B cell (primary cell): ENCODE measurements at regions of chr6 and their contacts with region 1.

Region 1: DNA sequence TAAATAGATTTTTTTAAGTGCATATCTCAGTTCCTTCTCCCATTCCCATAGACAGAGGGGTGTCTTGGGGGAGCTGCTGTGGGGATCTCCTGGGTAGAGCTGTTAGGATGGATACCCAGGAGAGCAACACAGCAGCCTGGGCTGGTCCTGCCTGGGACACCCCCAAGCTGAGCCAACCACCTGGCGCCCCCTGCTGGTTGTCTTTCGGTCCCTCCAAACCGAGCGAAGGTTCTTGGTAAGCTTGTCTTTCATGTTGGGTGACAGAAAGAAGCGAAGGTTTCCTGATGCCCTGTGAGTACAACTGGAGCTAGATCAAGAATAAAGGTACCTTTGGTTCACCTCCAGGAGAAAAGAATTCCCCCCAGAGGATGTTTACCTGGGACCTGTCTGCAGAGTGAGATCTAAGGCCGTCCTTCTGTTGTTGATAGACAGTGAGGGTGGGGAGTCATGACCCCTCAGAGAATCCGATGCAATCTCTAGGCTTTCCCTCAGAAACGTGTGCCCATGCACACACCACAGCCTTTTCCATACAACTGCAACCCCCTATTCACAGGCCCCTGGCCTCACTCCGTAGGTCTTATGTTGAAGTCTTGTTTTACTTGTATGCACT is 50.8 kb downstream of the SNX9 start:
- DNase-seq: peak; percentile 85
- ATAC-seq: peak; percentile 86
- H3K4me3 ChIP-seq: no peak overlapping the region
- H3K4me3 Mint-ChIP-seq: no peak overlapping the region
- H3K27ac ChIP-seq: no peak overlapping the region
- H3K27ac Mint-ChIP-seq: no peak overlapping the region
- H3K4me1 ChIP-seq: peaks cover 12 to 16% of the 10 kb centered on the region in 2 donors
- H3K4me1 Mint-ChIP-seq: peaks cover 26% of the 10 kb centered on the region
- H3K27me3 ChIP-seq: no peaks in the 10 kb centered on the region
- H3K27me3 Mint-ChIP-seq: no peaks in the 10 kb centered on the region
- CTCF ChIP-seq: peak; percentile 96

Region 2: DNA sequence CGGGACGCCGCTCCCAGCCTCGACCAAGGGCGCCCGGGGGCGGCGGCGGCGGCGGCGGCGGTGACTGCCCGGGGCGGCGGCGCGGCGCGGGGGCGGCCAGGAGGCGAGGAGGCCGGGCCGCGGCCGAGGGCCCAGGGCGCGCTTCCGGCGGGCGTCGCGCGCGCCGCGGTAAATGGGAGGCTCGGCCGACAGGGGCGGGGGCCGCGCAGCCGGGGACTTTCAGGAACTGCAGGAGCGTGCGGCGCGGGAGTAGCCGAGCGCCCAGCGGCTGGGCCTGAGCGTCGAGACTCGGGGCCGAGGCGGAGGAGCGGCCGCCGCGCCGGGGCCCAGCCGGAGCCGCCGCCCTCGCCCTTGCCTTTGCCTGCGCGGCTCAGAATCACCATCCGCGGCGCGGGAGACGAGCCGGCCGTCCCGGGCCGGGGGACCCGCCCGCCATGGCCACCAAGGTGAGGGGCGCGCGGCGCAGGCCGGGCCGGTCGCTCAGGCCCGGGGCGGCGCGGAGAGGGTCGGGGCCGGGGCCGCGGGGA is 50.8 kb before region 1 on chr6 and contains the start of gene SNX9:
- CTCF ChIA-PET with region 1: interaction called, 7 read pairs
- POLR2A ChIA-PET with region 1: no interaction called
- intact Hi-C with region 1: loop called (anchors 5 kb)
- DNase-seq: peak; percentile 85
- ATAC-seq: peak; percentile 67
- H3K4me3 ChIP-seq: peak within 1 kb of the TSS; percentile 62 to 91 (median 86)
- H3K4me3 Mint-ChIP-seq: peak within 1 kb of the TSS; percentile 94
- H3K27ac ChIP-seq: peak within 1 kb of the TSS; percentile 74 to 95
- H3K27ac Mint-ChIP-seq: peak within 1 kb of the TSS; percentile 97
- H3K4me1 ChIP-seq: peaks cover 16 to 17% of the 10 kb centered on the region in 2 donors
- H3K4me1 Mint-ChIP-seq: peaks cover 43% of the 10 kb centered on the region
- H3K27me3 ChIP-seq: no peaks in the 10 kb centered on the region
- H3K27me3 Mint-ChIP-seq: no peaks in the 10 kb centered on the region
- CTCF ChIP-seq: no peak
- total RNA-seq, gene SNX9: 50.7 and 53.0 TPM in 2 replicates

Region 3: GRCh38 chr6:157841211-157841840 is 32.5 kb before region 1 on chr6:
- CTCF ChIA-PET with region 1: interaction called, 26 read pairs
- POLR2A ChIA-PET with region 1: no interaction called
- intact Hi-C with region 1: no loop called
- DNase-seq: peak; percentile 63
- ATAC-seq: peak; percentile 95
- H3K4me3 ChIP-seq: no peak overlapping the region
- H3K4me3 Mint-ChIP-seq: peak overlapping the region; percentile 37
- H3K27ac ChIP-seq: no peak overlapping the region
- H3K27ac Mint-ChIP-seq: peak overlapping the region; percentile 26
- H3K4me1 ChIP-seq: peaks cover 46 to 51% of the 10 kb centered on the region in 2 donors
- H3K4me1 Mint-ChIP-seq: peaks cover 75% of the 10 kb centered on the region
- H3K27me3 ChIP-seq: no peaks in the 10 kb centered on the region
- H3K27me3 Mint-ChIP-seq: no peaks in the 10 kb centered on the region
- CTCF ChIP-seq: no peak

Region 4: GRCh38 chr6:157885211-157885788 is 11.5 kb after region 1 on chr6:
- CTCF ChIA-PET with region 1: interaction called, 30 read pairs
- POLR2A ChIA-PET with region 1: no interaction called
- intact Hi-C with region 1: no loop called
- DNase-seq: peak; percentile 85
- ATAC-seq: peak; percentile 80
- H3K4me3 ChIP-seq: peak overlapping the region in 1 of 5 experiments; percentile 23
- H3K4me3 Mint-ChIP-seq: peak overlapping the region; percentile 51
- H3K27ac ChIP-seq: peak overlapping the region; percentile 66 to 71
- H3K27ac Mint-ChIP-seq: peak overlapping the region; percentile 78
- H3K4me1 ChIP-seq: peaks cover 16 to 19% of the 10 kb centered on the region in 2 donors
- H3K4me1 Mint-ChIP-seq: peaks cover 54% of the 10 kb centered on the region
- H3K27me3 ChIP-seq: no peaks in the 10 kb centered on the region
- H3K27me3 Mint-ChIP-seq: no peaks in the 10 kb centered on the region
- CTCF ChIP-seq: no peak

Region 5: DNA sequence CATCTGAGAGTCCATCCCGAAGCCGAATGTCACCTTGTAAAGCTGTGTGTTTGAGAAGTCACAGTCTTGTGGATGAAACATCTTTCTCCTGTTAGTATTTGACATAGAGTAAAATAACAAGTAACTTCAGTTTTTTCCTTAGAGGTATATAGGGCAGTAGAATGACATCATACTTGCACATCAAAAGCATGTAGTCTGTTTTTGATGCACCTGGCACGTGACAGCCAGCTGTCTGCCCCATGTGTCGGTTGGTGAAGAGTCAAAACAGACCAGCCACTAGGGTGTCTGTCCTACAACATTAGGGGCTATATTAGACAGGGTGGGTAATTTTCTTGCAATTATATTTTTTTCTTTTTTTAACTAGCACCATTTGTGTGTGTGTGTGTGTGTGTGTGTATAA is 19.4 kb after region 1 on chr6:
- CTCF ChIA-PET with region 1: interaction called, 30 read pairs
- POLR2A ChIA-PET with region 1: no interaction called
- intact Hi-C with region 1: no loop called
- DNase-seq: peak; percentile 58
- ATAC-seq: peak; percentile 77
- H3K4me3 ChIP-seq: no peak overlapping the region
- H3K4me3 Mint-ChIP-seq: no peak overlapping the region
- H3K27ac ChIP-seq: no peak overlapping the region
- H3K27ac Mint-ChIP-seq: no peak overlapping the region
- H3K4me1 ChIP-seq: no peaks in the 10 kb centered on the region
- H3K4me1 Mint-ChIP-seq: peaks cover 33% of the 10 kb centered on the region
- H3K27me3 ChIP-seq: no peaks in the 10 kb centered on the region
- H3K27me3 Mint-ChIP-seq: no peaks in the 10 kb centered on the region
- CTCF ChIP-seq: no peak

Region 6: GRCh38 chr6:157967020-157967419 is 93.2 kb after region 1 on chr6:
- CTCF ChIA-PET with region 1: no interaction called
- POLR2A ChIA-PET with region 1: no interaction called
- intact Hi-C with region 1: no loop called
- DNase-seq: no peak
- ATAC-seq: no peak
- H3K4me3 ChIP-seq: no peak overlapping the region
- H3K4me3 Mint-ChIP-seq: no peak overlapping the region
- H3K27ac ChIP-seq: no peak overlapping the region
- H3K27ac Mint-ChIP-seq: no peak overlapping the region
- H3K4me1 ChIP-seq: no peaks in the 10 kb centered on the region
- H3K4me1 Mint-ChIP-seq: peaks cover 4% of the 10 kb centered on the region
- H3K27me3 ChIP-seq: peaks cover 0 to 8% (median 0%) of the 10 kb centered on the region in 4 experiments
- H3K27me3 Mint-ChIP-seq: peaks cover 17% of the 10 kb centered on the region
- CTCF ChIP-seq: no peak